Naive thymus-derived CD4-positive, alpha-beta T cell (primary cell): ENCODE measurements at regions of chr20 and their contacts with region 1.

Region 1: GRCh38 chr20:24917797-24918578 is 31.1 kb upstream of the CST7 start:
- DNase-seq: peak in 7 of 9 donors; percentile 18 to 62 (median 26)
- ATAC-seq: peak; percentile 79
- H3K4me3 ChIP-seq: no peak overlapping the region
- H3K4me3 Mint-ChIP-seq: no peak overlapping the region
- H3K27ac ChIP-seq: no peak overlapping the region
- H3K27ac Mint-ChIP-seq: peak overlapping the region in 2 of 9 donors; percentile 5 to 51
- H3K4me1 ChIP-seq: peaks cover 0 to 4% of the 10 kb centered on the region in 2 donors
- H3K4me1 Mint-ChIP-seq: peaks cover 0 to 9% (median 4%) of the 10 kb centered on the region in 7 donors
- H3K27me3 ChIP-seq: no peaks in the 10 kb centered on the region
- H3K27me3 Mint-ChIP-seq: peaks cover 0 to 16% (median 8%) of the 10 kb centered on the region in 5 donors

Region 2: GRCh38 chr20:23668477-23668951 is 1249.5 kb before region 1 on chr20:
- CTCF ChIA-PET with region 1: no interaction called
- POLR2A ChIA-PET with region 1: no interaction called
- intact Hi-C with region 1: loop called in 1 of 2 experiments (anchors 5 kb)
- DNase-seq: peak in 6 of 9 donors; percentile 9 to 29 (median 22)
- ATAC-seq: peak; percentile 73
- H3K4me3 ChIP-seq: no peak overlapping the region
- H3K4me3 Mint-ChIP-seq: no peak overlapping the region
- H3K27ac ChIP-seq: no peak overlapping the region
- H3K27ac Mint-ChIP-seq: no peak overlapping the region
- H3K4me1 ChIP-seq: no peaks in the 10 kb centered on the region
- H3K4me1 Mint-ChIP-seq: no peaks in the 10 kb centered on the region
- H3K27me3 ChIP-seq: no peaks in the 10 kb centered on the region
- H3K27me3 Mint-ChIP-seq: no peaks in the 10 kb centered on the region

Region 3: DNA sequence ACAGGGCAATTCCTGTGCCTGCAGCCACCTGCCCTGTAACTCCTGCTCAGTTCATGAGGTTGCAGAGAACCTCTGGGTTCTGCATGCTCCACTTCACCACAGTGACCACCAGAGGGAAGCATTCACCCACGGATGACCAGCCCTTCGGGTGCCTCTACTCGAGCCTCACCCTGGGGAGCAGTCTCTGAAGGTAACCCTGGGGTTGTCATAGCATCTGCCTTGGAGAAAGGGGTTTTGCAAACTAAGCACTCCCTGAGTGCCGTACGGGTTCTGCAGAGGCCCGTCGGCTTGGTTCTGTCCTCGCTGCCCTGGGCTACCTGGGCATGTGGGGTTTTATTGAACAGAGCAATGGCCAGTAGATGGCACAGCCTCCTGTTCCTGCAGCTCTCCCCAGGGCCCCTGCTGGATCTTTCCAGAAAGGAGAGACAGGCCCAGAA is 1028.2 kb before region 1 on chr20:
- CTCF ChIA-PET with region 1: no interaction called
- POLR2A ChIA-PET with region 1: no interaction called
- intact Hi-C with region 1: loop called in 1 of 2 experiments (anchors 2 kb)
- DNase-seq: peak; percentile 49 to 79 (median 67)
- ATAC-seq: peak; percentile 94
- H3K4me3 ChIP-seq: no peak overlapping the region
- H3K4me3 Mint-ChIP-seq: no peak overlapping the region
- H3K27ac ChIP-seq: no peak overlapping the region
- H3K27ac Mint-ChIP-seq: no peak overlapping the region
- H3K4me1 ChIP-seq: no peaks in the 10 kb centered on the region
- H3K4me1 Mint-ChIP-seq: peaks cover 0 to 4% (median 0%) of the 10 kb centered on the region in 7 donors
- H3K27me3 ChIP-seq: no peaks in the 10 kb centered on the region
- H3K27me3 Mint-ChIP-seq: peaks cover 3 to 17% (median 10%) of the 10 kb centered on the region in 5 donors

Region 4: GRCh38 chr20:24160563-24161375 is 757.2 kb before region 1 on chr20:
- CTCF ChIA-PET with region 1: no interaction called
- POLR2A ChIA-PET with region 1: no interaction called
- intact Hi-C with region 1: loop called in 1 of 2 experiments (anchors 2 kb)
- DNase-seq: peak in 2 of 9 donors; percentile 4 to 16
- ATAC-seq: no peak
- H3K4me3 ChIP-seq: no peak overlapping the region
- H3K4me3 Mint-ChIP-seq: no peak overlapping the region
- H3K27ac ChIP-seq: no peak overlapping the region
- H3K27ac Mint-ChIP-seq: peak overlapping the region in 1 of 9 donors; percentile 23
- H3K4me1 ChIP-seq: no peaks in the 10 kb centered on the region
- H3K4me1 Mint-ChIP-seq: peaks cover 0 to 6% (median 4%) of the 10 kb centered on the region in 7 donors
- H3K27me3 ChIP-seq: no peaks in the 10 kb centered on the region
- H3K27me3 Mint-ChIP-seq: peaks cover 0 to 2% (median 0%) of the 10 kb centered on the region in 5 donors

Region 5: GRCh38 chr20:24303381-24303780 is 614.6 kb before region 1 on chr20:
- CTCF ChIA-PET with region 1: no interaction called
- POLR2A ChIA-PET with region 1: no interaction called
- intact Hi-C with region 1: loop called in 1 of 2 experiments (anchors 5 kb)
- DNase-seq: no peak
- ATAC-seq: no peak
- H3K4me3 ChIP-seq: no peak overlapping the region
- H3K4me3 Mint-ChIP-seq: no peak overlapping the region
- H3K27ac ChIP-seq: no peak overlapping the region
- H3K27ac Mint-ChIP-seq: no peak overlapping the region
- H3K4me1 ChIP-seq: no peaks in the 10 kb centered on the region
- H3K4me1 Mint-ChIP-seq: peaks cover 2 to 14% (median 11%) of the 10 kb centered on the region in 7 donors
- H3K27me3 ChIP-seq: no peaks in the 10 kb centered on the region
- H3K27me3 Mint-ChIP-seq: peaks cover 0 to 26% (median 11%) of the 10 kb centered on the region in 5 donors

Region 6: GRCh38 chr20:24738981-24739633 is 178.9 kb before region 1 on chr20:
- CTCF ChIA-PET with region 1: no interaction called
- POLR2A ChIA-PET with region 1: no interaction called
- intact Hi-C with region 1: loop called in 1 of 2 experiments (anchors 10 kb)
- DNase-seq: peak in 5 of 9 donors; percentile 3 to 46 (median 10)
- ATAC-seq: no peak
- H3K4me3 ChIP-seq: peak overlapping the region; percentile 29
- H3K4me3 Mint-ChIP-seq: peak overlapping the region; percentile 47 to 86 (median 71)
- H3K27ac ChIP-seq: no peak overlapping the region
- H3K27ac Mint-ChIP-seq: peak overlapping the region; percentile 40 to 94 (median 82)
- H3K4me1 ChIP-seq: no peaks in the 10 kb centered on the region
- H3K4me1 Mint-ChIP-seq: peaks cover 10 to 22% (median 20%) of the 10 kb centered on the region in 7 donors
- H3K27me3 ChIP-seq: no peaks in the 10 kb centered on the region
- H3K27me3 Mint-ChIP-seq: no peaks in the 10 kb centered on the region

Region 7: GRCh38 chr20:24891546-24892393 is 26.2 kb before region 1 on chr20:
- CTCF ChIA-PET with region 1: no interaction called
- POLR2A ChIA-PET with region 1: no interaction called
- intact Hi-C with region 1: no loop called
- DNase-seq: no peak
- ATAC-seq: no peak
- H3K4me3 ChIP-seq: no peak overlapping the region
- H3K4me3 Mint-ChIP-seq: no peak overlapping the region
- H3K27ac ChIP-seq: no peak overlapping the region
- H3K27ac Mint-ChIP-seq: no peak overlapping the region
- H3K4me1 ChIP-seq: no peaks in the 10 kb centered on the region
- H3K4me1 Mint-ChIP-seq: no peaks in the 10 kb centered on the region
- H3K27me3 ChIP-seq: no peaks in the 10 kb centered on the region
- H3K27me3 Mint-ChIP-seq: peaks cover 0 to 10% (median 4%) of the 10 kb centered on the region in 5 donors

Region 8: GRCh38 chr20:25360635-25361286 is 442.8 kb after region 1 on chr20:
- CTCF ChIA-PET with region 1: no interaction called
- POLR2A ChIA-PET with region 1: no interaction called
- intact Hi-C with region 1: no loop called
- DNase-seq: no peak
- ATAC-seq: peak; percentile 70
- H3K4me3 ChIP-seq: no peak overlapping the region
- H3K4me3 Mint-ChIP-seq: no peak overlapping the region
- H3K27ac ChIP-seq: no peak overlapping the region
- H3K27ac Mint-ChIP-seq: peak overlapping the region in 1 of 9 donors; percentile 38
- H3K4me1 ChIP-seq: no peaks in the 10 kb centered on the region
- H3K4me1 Mint-ChIP-seq: peaks cover 10 to 38% (median 28%) of the 10 kb centered on the region in 7 donors
- H3K27me3 ChIP-seq: no peaks in the 10 kb centered on the region
- H3K27me3 Mint-ChIP-seq: no peaks in the 10 kb centered on the region